Activated CD4-positive, alpha-beta T cell treated with anti-CD3 and anti-CD28 coated beads, Interleukin-2, amount 10 ng/mL, durations not matched to agents 7 days and 5 days (primary cell): ENCODE measurements at regions of chr1 and their contacts with region 1.

Region 1: DNA sequence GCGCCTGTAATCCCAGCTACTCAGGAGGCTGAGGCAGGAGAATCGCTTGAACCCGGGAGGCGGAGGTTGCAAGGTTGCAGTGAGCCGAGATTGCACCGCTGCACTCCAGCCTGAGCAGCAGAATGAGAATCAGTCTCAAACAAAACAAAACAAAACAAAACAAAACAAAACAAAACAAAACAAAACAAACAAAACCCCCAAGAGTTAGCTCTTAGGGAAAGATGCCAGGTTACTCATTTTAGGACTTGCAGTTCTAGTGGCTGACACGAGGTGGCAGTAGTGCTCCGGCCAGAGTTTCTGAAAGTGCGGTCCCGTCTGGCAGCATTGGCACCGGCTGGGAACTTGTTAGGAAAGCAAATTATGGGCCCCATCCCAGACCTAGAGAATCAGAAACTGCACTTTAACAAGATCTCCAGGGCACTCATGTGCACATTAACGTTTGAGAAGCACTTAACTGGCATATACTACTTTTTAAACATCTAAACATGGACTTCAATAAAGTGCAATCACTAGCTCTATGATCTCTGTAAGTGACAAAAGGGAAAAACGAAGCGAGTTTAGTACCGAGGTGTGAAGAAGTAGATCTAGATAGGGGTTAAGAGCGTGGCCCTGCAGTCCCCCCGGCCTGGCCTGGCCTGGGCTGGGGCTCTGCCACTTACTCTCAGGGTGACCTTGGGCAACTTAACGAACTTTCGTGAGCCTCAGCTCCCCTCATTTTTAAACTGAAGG is 41.9 kb upstream of the TNFRSF1B start:
- DNase-seq: peak; percentile 79
- H3K4me3 Mint-ChIP-seq: no peak overlapping the region
- H3K27ac Mint-ChIP-seq: peak overlapping the region; percentile 1
- H3K4me1 Mint-ChIP-seq: peaks cover 51% of the 10 kb centered on the region
- H3K27me3 Mint-ChIP-seq: no peaks in the 10 kb centered on the region

Region 2: DNA sequence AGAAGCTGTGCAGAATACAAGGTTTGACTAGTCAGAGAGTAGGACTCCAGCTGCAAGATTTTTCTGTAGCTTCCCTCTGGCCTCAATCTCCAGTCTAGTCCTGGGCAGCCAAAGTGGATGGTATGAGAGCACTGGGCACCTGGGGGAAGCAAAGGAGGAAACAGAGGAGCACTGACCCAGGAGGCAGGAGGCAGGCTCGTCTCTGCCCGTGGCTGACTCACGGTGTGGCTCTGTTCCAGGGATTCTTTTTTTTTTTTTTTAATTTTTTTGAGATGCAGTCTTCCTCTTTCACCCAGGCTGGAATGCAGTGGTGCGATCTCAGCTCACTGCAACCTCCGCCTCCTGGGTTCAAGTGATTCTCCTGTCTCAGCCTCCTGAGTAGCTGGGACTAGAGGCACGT is 262.0 kb before region 1 on chr1:
- CTCF ChIA-PET with region 1: no interaction called
- POLR2A ChIA-PET with region 1: no interaction called
- DNase-seq: no peak
- H3K4me3 Mint-ChIP-seq: no peak overlapping the region
- H3K27ac Mint-ChIP-seq: no peak overlapping the region
- H3K4me1 Mint-ChIP-seq: no peaks in the 10 kb centered on the region
- H3K27me3 Mint-ChIP-seq: peaks cover 44% of the 10 kb centered on the region

Region 3: GRCh38 chr1:12067900-12068821 is 56.7 kb before region 1 on chr1:
- CTCF ChIA-PET with region 1: no interaction called
- POLR2A ChIA-PET with region 1: no interaction called
- DNase-seq: peak; percentile 51
- H3K4me3 Mint-ChIP-seq: peak overlapping the region; percentile 5
- H3K27ac Mint-ChIP-seq: peak overlapping the region; percentile 73
- H3K4me1 Mint-ChIP-seq: peaks cover 59% of the 10 kb centered on the region
- H3K27me3 Mint-ChIP-seq: peaks cover 21% of the 10 kb centered on the region

Region 4: GRCh38 chr1:12083766-12084165 is 41.1 kb before region 1 on chr1:
- CTCF ChIA-PET with region 1: no interaction called
- POLR2A ChIA-PET with region 1: no interaction called
- DNase-seq: no peak
- H3K4me3 Mint-ChIP-seq: no peak overlapping the region
- H3K27ac Mint-ChIP-seq: no peak overlapping the region
- H3K4me1 Mint-ChIP-seq: peaks cover 60% of the 10 kb centered on the region
- H3K27me3 Mint-ChIP-seq: no peaks in the 10 kb centered on the region

Region 5: DNA sequence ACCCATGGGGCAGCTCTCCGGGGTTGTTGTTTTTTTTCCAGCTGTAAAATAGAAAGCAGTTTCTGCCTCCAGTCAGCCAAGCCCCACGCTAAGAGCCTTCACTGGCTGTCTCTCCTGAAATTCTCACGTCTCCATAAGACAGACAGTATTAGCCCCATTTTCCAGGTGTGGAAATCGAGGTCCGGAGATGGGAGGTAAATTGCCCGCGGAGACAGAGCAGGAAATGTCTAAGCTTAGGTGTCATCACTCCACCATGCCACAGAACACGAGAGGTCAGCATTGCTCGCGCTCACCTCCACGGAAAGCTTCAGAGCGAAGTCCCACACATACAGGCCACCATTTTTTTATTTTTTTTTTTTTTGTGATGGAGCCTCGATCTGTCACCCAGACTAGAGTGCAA is 17.1 kb before region 1 on chr1:
- CTCF ChIA-PET with region 1: interaction called, 19 read pairs
- POLR2A ChIA-PET with region 1: interaction called, 4 read pairs
- DNase-seq: no peak
- H3K4me3 Mint-ChIP-seq: no peak overlapping the region
- H3K27ac Mint-ChIP-seq: no peak overlapping the region
- H3K4me1 Mint-ChIP-seq: peaks cover 1% of the 10 kb centered on the region
- H3K27me3 Mint-ChIP-seq: no peaks in the 10 kb centered on the region

Region 6: GRCh38 chr1:12135612-12136011 is 10.8 kb after region 1 on chr1:
- CTCF ChIA-PET with region 1: interaction called, 11 read pairs
- POLR2A ChIA-PET with region 1: no interaction called
- DNase-seq: no peak
- H3K4me3 Mint-ChIP-seq: no peak overlapping the region
- H3K27ac Mint-ChIP-seq: no peak overlapping the region
- H3K4me1 Mint-ChIP-seq: peaks cover 28% of the 10 kb centered on the region
- H3K27me3 Mint-ChIP-seq: no peaks in the 10 kb centered on the region

Region 7: DNA sequence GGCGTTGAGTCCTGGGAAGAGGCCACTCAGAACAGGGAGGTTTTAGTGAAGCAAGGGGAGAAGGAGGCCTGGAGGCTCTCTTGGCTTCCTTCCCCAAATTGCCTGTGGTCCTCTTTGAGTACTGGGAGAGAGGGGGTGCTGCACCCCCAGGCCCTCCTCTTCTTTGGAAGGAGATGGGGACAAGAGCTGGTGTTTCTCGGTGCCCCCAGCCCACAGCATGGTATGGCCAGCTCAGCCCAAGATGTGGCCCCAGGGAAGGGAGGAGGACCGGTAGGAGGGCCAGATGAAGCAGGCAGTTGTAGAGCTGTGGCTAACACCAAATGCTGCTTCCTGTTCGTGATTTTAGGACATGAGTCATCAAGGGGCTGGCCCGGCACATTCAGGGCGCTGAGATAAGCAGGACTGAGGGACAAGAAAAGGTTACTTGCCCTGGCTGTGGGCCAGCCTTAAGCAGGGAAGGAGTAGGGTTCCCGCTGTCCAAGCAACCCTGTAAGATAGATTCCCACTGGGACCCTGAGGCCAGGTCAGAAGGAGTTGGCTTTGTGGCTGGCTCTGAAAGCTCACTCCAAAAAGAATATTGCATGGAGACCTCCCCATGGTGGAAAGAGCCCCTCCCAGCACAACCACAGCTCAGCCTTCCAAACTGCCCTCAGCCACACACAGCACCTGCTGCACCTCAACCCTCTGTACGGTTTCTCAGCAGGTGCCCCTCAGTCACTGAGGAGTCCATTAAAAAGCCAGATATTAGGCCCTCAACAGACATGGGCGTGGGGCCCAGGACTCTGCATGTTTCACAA is 37.0 kb after region 1 on chr1:
- CTCF ChIA-PET with region 1: interaction called, 23 read pairs
- POLR2A ChIA-PET with region 1: interaction called, 4 read pairs
- DNase-seq: peak; percentile 81
- H3K4me3 Mint-ChIP-seq: peak overlapping the region; percentile 18
- H3K27ac Mint-ChIP-seq: peak overlapping the region; percentile 95
- H3K4me1 Mint-ChIP-seq: peaks cover 84% of the 10 kb centered on the region
- H3K27me3 Mint-ChIP-seq: no peaks in the 10 kb centered on the region

Region 8: DNA sequence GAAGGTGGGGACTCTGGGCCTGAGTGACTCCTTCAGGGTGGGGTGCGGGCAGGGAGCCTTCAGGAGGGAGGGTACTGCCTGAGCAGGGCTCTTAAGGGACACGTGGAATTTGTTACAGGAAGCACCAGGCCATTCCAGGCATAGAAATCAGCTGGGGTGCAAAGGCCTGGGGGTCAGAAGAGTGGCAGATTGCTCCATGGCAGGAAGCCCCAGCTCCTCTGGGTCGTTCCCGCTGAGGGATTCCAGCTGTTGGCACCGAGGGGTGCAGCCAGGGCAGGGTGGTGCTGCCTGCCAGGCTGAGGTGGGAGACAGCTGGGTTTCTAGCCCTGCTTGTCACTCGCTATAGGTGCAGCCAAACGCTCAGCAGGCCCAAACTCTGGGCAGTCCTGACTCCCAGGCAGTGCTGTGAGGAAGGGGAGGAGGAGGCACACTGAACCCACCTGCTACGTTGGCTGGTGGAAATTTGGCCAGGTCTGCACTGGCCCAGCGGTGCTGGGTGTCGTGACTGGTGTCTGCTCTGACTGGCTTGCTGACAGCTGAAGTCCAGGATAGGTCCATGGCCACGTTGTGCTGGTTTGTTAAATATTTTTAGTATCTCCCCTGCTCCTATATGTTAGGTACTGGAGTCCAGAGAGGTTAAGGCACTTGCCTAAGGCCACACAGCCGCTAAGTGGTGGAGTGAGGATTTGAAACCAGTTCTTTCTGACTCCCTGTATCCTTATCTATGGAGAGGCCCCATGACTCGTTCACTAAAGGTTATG is 61.2 kb after region 1 on chr1:
- CTCF ChIA-PET with region 1: interaction called, 11 read pairs
- POLR2A ChIA-PET with region 1: no interaction called
- DNase-seq: no peak
- H3K4me3 Mint-ChIP-seq: no peak overlapping the region
- H3K27ac Mint-ChIP-seq: no peak overlapping the region
- H3K4me1 Mint-ChIP-seq: peaks cover 43% of the 10 kb centered on the region
- H3K27me3 Mint-ChIP-seq: no peaks in the 10 kb centered on the region

Region 9: DNA sequence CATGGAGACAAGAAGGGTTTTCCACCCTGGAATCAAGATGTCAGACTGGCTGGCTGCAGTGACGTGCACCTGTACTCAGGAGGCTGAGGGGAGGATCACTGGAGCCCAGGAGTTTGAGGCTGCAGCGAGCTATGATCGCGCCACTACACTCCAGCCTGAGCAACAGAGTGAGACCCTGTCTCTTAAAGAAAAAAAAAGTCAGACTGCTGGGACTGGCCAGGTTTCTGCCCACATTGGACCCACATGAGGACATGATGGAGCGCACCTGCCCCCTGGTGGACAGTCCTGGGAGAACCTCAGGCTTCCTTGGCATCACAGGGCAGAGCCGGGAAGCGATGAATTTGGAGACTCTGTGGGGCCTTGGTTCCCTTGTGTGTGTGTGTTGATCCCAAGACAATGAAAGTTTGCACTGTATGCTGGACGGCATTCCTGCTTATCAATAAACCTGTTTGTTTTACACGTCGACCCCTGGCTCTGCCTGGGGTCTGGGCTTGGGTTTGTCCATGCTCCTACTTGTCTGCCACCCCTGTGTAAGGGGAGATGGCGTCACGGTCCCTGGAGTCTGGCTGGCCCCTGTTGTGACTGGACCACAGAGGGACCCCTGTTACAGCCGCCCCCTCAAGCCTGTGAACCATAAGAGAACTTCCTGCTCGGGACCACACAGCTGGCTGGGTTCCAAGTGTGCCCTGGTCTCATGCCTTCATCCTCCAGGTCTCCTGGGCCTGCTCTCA is 84.1 kb after region 1 on chr1:
- CTCF ChIA-PET with region 1: interaction called, 91 read pairs
- POLR2A ChIA-PET with region 1: no interaction called
- DNase-seq: peak; percentile 87
- H3K4me3 Mint-ChIP-seq: no peak overlapping the region
- H3K27ac Mint-ChIP-seq: peak overlapping the region; percentile 76
- H3K4me1 Mint-ChIP-seq: peaks cover 63% of the 10 kb centered on the region
- H3K27me3 Mint-ChIP-seq: peaks cover 3% of the 10 kb centered on the region